ENCODE measurements at regions of chr3 and their contacts with region 1.

Region 1: DNA sequence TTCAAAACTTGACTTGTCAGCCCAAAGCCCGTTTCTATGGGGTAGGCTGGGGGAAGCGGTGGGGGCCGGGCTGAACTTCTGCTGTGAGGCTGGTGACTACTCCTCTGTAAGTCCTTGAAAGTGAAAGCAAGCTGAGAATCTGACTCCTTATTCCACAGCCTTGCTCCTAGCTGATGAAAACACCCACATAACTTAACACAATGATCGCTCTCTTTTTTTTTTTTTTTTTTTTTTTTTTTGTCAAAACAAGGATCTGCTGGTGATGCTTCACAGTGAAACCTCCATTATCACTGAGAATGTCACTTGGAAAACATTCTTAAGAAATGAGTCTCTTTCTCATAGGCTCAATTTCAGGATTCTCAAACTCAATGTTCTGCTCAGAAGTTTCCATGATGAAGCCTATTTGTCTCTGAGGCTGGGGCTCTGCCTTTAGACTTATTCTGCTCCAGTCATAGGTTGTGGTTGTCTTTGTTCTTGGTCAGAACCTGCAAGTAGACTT is 31.4 kb upstream of the TKT start:
- DNase-seq: no peak
- H3K4me3 Mint-ChIP-seq: no peak overlapping the region
- H3K27ac Mint-ChIP-seq: no peak overlapping the region
- H3K4me1 Mint-ChIP-seq: no peaks in the 10 kb centered on the region
- H3K27me3 Mint-ChIP-seq: no peaks in the 10 kb centered on the region
- CTCF ChIP-seq: no peak

Region 2: GRCh38 chr3:53303957-53304356 is 16.8 kb after region 1 on chr3:
- CTCF ChIA-PET with region 1: interaction called, 13 read pairs
- POLR2A ChIA-PET with region 1: no interaction called
- intact Hi-C with region 1: no loop called
- DNase-seq: no peak
- H3K4me3 Mint-ChIP-seq: no peak overlapping the region
- H3K27ac Mint-ChIP-seq: no peak overlapping the region
- H3K4me1 Mint-ChIP-seq: no peaks in the 10 kb centered on the region
- H3K27me3 Mint-ChIP-seq: no peaks in the 10 kb centered on the region
- CTCF ChIP-seq: no peak

Measured in MCF 10A (cell line).